ENCODE measurements at regions of chr2 and their contacts with region 1.

Region 1: DNA sequence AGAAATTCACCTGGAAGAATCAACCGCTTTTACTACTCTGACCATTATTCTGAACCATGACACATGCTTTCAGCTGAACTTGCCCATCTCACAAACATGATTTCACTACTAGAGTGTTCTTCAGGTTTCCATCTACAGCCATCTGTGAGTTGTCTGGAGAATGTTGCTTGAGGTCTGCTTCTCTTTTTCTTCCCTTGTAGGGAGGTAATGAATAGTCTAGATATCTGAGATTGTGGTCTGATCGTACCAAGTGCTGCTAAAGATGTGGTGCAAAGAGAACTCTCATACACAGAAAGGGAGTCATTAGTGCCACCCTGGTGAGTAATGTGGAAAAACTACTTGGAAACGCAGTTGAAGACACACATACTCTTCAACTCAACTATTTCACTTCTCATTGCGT is 10.2 kb downstream of the SOWAHC start:
- DNase-seq: no peak
- H3K4me3 ChIP-seq: no peak overlapping the region
- H3K4me3 Mint-ChIP-seq: peak overlapping the region; percentile 50
- H3K27ac Mint-ChIP-seq: peak overlapping the region; percentile 73
- H3K4me1 ChIP-seq: peaks cover 30% of the 10 kb centered on the region
- H3K4me1 Mint-ChIP-seq: peaks cover 27% of the 10 kb centered on the region
- H3K27me3 ChIP-seq: no peaks in the 10 kb centered on the region
- H3K27me3 Mint-ChIP-seq: no peaks in the 10 kb centered on the region
- CTCF ChIP-seq: no peak

Region 2: DNA sequence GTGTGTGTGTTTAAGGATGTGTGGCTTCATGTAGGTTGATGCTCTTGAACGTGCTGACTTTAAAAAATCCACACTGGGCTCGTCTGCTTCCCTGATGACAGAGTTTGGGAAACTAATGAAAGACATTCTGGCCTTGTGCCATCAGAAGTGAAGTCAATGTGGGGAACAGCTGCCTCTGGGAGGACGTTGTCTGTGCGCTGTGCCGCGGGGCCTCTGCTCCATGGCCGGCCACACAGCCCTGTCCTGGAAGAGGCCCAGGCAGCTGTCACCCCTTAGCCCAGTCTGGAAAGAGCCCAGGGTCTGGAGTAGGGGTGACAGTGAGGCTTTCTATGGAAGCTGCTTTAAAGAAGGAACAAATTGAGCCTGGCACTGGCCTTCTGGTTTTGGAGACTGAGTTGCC is 339.5 kb before region 1 on chr2:
- CTCF ChIA-PET with region 1: no interaction called
- POLR2A ChIA-PET with region 1: no interaction called
- intact Hi-C with region 1: no loop called
- DNase-seq: no peak
- H3K4me3 ChIP-seq: no peak overlapping the region
- H3K4me3 Mint-ChIP-seq: no peak overlapping the region
- H3K27ac Mint-ChIP-seq: no peak overlapping the region
- H3K4me1 ChIP-seq: no peaks in the 10 kb centered on the region
- H3K4me1 Mint-ChIP-seq: no peaks in the 10 kb centered on the region
- H3K27me3 ChIP-seq: 0 out of 2 replicates have a peak, but pooled peaks cover 1% of the 10 kb centered on the region
- H3K27me3 Mint-ChIP-seq: peaks cover 10% of the 10 kb centered on the region
- CTCF ChIP-seq: no peak

Region 3: GRCh38 chr2:109613922-109614714 is 10.2 kb before region 1 on chr2 and contains the starts of genes SEPTIN10 and SOWAHC:
- CTCF ChIA-PET with region 1: interaction called, 11 read pairs
- POLR2A ChIA-PET with region 1: interaction called, 29 read pairs
- intact Hi-C with region 1: loop called (anchors 1 kb)
- DNase-seq: peak; percentile 99 to 100
- H3K4me3 ChIP-seq: peak within 1 kb of the TSS; percentile 73
- H3K4me3 Mint-ChIP-seq: peak within 1 kb of the TSS; percentile 95
- H3K27ac Mint-ChIP-seq: peak within 1 kb of the TSS; percentile 95
- H3K4me1 ChIP-seq: peaks cover 32% of the 10 kb centered on the region
- H3K4me1 Mint-ChIP-seq: peaks cover 24% of the 10 kb centered on the region
- H3K27me3 ChIP-seq: no peaks in the 10 kb centered on the region
- H3K27me3 Mint-ChIP-seq: no peaks in the 10 kb centered on the region
- CTCF ChIP-seq: no peak
- total RNA-seq, gene SEPTIN10: 77.3 and 83.7 TPM in 2 replicates
- total RNA-seq, gene SOWAHC: 20.3 and 21.4 TPM in 2 replicates

Region 4: DNA sequence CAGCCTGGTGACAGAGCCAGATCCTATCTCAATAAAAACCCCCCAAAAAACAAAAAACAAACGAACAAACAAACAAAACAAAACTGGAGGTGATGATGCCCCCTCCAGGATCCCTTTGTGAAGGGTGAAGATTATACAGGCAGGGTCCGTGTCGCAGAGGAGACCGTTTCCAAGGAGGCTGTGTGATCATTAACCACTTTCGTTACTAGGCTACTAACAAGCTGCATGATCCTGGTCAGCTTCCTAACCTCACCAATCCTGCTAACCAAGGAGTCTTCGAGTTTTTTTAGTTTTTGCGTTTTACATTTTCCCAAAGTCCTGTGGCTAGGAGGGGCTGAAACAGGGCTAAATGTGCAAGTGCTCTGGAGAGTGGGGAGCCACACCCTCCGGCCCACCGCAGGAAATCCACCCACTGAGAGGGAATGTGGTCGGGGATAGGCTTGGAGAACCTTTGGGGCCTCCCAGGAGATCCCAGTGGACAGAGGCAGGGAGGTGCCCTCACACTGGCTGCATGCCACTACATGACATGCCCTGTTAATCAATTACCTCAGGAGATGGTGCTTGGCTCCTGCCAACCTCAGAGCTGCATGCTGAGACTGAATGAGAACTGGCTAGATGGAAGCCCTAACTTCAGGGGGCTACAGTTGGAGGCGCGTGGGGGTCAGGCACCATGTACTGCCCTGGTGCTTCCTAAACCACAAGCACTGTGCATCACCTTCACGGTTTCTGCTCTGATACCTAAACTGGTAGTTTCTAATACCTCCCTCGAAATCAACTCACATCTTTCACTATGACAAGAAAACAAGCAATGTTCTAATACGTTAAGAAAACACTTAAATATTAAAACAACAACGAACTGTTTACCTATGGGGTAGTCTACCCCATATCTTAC is 102.3 kb after region 1 on chr2:
- CTCF ChIA-PET with region 1: no interaction called
- POLR2A ChIA-PET with region 1: no interaction called
- intact Hi-C with region 1: no loop called
- DNase-seq: peak in 1 of 2 experiments; percentile 21
- H3K4me3 ChIP-seq: no peak overlapping the region
- H3K4me3 Mint-ChIP-seq: no peak overlapping the region
- H3K27ac Mint-ChIP-seq: no peak overlapping the region
- H3K4me1 ChIP-seq: no peaks in the 10 kb centered on the region
- H3K4me1 Mint-ChIP-seq: no peaks in the 10 kb centered on the region
- H3K27me3 ChIP-seq: no peaks in the 10 kb centered on the region
- H3K27me3 Mint-ChIP-seq: no peaks in the 10 kb centered on the region
- CTCF ChIP-seq: no peak